ENCODE measurements at regions of chr7 and their contacts with region 1.

Region 1: GRCh38 chr7:74068393-74069085 is 15.1 kb upstream of the LIMK1 start:
- DNase-seq: no peak
- H3K4me3 ChIP-seq: no peak overlapping the region
- H3K27ac ChIP-seq: peak overlapping the region in 1 of 4 donors; percentile 47
- H3K4me1 ChIP-seq: peaks cover 0 to 9% (median 0%) of the 10 kb centered on the region in 3 donors
- H3K27me3 ChIP-seq: no peaks in the 10 kb centered on the region
- CTCF ChIP-seq: no peak
- POLR2A ChIP-seq: no peak

Region 2: GRCh38 chr7:74206589-74207120 is 138.1 kb after region 1 on chr7:
- intact Hi-C with region 1: loop called (anchors 2 kb)
- DNase-seq: no peak
- H3K4me3 ChIP-seq: peak overlapping the region in 3 of 4 donors; percentile 7 to 52 (median 30)
- H3K27ac ChIP-seq: no peak overlapping the region
- H3K4me1 ChIP-seq: peaks cover 5 to 41% (median 7%) of the 10 kb centered on the region in 3 donors
- H3K27me3 ChIP-seq: peaks cover 0 to 9% (median 0%) of the 10 kb centered on the region in 4 donors
- CTCF ChIP-seq: peak; percentile 95 to 98 (median 98)
- POLR2A ChIP-seq: no peak

Region 3: GRCh38 chr7:74401137-74401859 is 332.8 kb after region 1 on chr7:
- intact Hi-C with region 1: loop called (anchors 5 kb)
- DNase-seq: no peak
- H3K4me3 ChIP-seq: no peak overlapping the region
- H3K27ac ChIP-seq: no peak overlapping the region
- H3K4me1 ChIP-seq: no peaks in the 10 kb centered on the region
- H3K27me3 ChIP-seq: no peaks in the 10 kb centered on the region
- CTCF ChIP-seq: peak; percentile 88 to 98 (median 94)
- POLR2A ChIP-seq: no peak